Mammary epithelial cell (primary cell): ENCODE measurements at regions of chr20 and their contacts with region 1.

Region 1: GRCh38 chr20:55057779-55058415 is 582.5 kb downstream of the DOK5 start:
- DNase-seq: peak; percentile 8
- H3K4me3 ChIP-seq: no peak overlapping the region
- H3K27ac ChIP-seq: no peak overlapping the region
- H3K4me1 ChIP-seq: peaks cover 9% of the 10 kb centered on the region
- H3K27me3 ChIP-seq: no peaks in the 10 kb centered on the region
- CTCF ChIP-seq: peak; percentile 76 to 80

Region 2: GRCh38 chr20:55031971-55032370 is 25.9 kb before region 1 on chr20:
- CTCF ChIA-PET with region 1: no interaction called
- dilution Hi-C with region 1: no loop called
- in situ Hi-C with region 1: no loop called
- intact Hi-C with region 1: no loop called
- DNase-seq: no peak
- H3K4me3 ChIP-seq: no peak overlapping the region
- H3K27ac ChIP-seq: no peak overlapping the region
- H3K4me1 ChIP-seq: no peaks in the 10 kb centered on the region
- H3K27me3 ChIP-seq: no peaks in the 10 kb centered on the region
- CTCF ChIP-seq: no peak

Region 3: DNA sequence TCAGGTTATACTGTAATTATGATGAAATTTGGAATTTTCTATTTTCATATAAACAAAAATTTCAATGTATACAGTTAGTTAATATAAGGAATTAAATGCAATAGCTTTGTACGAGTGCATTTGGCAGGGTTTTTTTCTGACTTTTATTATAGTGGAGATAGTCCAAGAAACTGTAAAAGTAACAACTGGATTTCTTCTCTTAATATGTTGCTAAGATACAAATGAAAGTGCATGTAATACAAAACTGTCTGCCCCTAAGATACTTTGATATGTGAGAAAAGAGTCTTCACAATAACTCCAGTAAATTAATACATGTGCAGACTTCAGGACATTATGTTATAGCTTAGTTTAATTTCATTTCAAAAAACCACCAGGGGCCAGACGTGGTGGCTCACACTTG is 226.0 kb after region 1 on chr20:
- CTCF ChIA-PET with region 1: no interaction called
- dilution Hi-C with region 1: no loop called
- in situ Hi-C with region 1: no loop called
- intact Hi-C with region 1: no loop called
- DNase-seq: no peak
- H3K4me3 ChIP-seq: no peak overlapping the region
- H3K27ac ChIP-seq: no peak overlapping the region
- H3K4me1 ChIP-seq: no peaks in the 10 kb centered on the region
- H3K27me3 ChIP-seq: no peaks in the 10 kb centered on the region
- CTCF ChIP-seq: no peak

Region 4: DNA sequence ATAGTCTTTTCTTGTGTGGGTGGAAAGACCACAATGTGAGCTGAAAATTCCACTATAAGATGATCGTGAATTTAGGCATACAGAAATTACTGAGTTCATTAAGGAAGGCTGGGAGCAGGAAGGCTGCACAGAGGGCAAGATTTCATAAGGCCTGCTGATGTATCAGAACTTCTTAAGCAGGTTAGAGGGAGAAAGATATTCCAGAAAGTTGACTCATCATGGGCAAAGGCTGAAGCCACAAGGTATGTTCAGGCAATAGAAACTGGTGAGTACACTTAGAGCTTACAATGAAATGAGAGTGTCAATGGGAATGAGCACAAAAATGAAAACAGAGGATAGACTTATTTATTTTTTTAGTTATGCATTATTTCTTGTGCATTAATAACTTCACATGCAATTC is 328.8 kb after region 1 on chr20:
- CTCF ChIA-PET with region 1: no interaction called
- dilution Hi-C with region 1: no loop called
- in situ Hi-C with region 1: no loop called
- intact Hi-C with region 1: loop called (anchors 10 kb)
- DNase-seq: peak; percentile 86
- H3K4me3 ChIP-seq: no peak overlapping the region
- H3K27ac ChIP-seq: no peak overlapping the region
- H3K4me1 ChIP-seq: peaks cover 4% of the 10 kb centered on the region
- H3K27me3 ChIP-seq: no peaks in the 10 kb centered on the region
- CTCF ChIP-seq: no peak